ENCODE measurements at regions of chr11 and their contacts with region 1.

Region 1: DNA sequence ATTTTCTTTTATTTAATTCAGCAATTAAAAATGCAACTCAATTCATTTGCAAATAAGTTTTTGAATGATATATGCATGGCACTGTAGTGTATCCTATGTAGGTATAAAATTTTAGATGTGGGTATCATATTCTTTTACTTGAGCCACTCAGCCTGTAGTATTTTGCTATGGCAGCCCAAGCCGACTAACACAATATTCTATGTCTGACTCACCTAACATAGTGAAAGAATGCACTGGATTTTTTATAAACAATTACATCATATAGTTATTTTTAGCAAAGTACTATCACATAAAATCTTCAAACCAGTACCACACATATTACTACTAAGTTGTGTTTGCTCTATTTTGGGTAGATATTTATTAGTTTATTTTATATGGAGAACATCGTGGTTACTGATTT is 21.9 kb upstream of the GRIA4 start:
- DNase-seq: no peak
- ATAC-seq: no peak
- H3K4me3 ChIP-seq: no peak overlapping the region
- H3K27ac ChIP-seq: no peak overlapping the region
- H3K4me1 ChIP-seq: no peaks in the 10 kb centered on the region
- H3K27me3 ChIP-seq: no peaks in the 10 kb centered on the region
- CTCF ChIP-seq: no peak
- POLR2A ChIP-seq: no peak

Region 2: GRCh38 chr11:105577641-105578040 is 10.4 kb before region 1 on chr11:
- in situ Hi-C with region 1: no loop called
- intact Hi-C with region 1: loop called (anchors 1 kb)
- DNase-seq: no peak
- ATAC-seq: no peak
- H3K4me3 ChIP-seq: no peak overlapping the region
- H3K27ac ChIP-seq: no peak overlapping the region
- H3K4me1 ChIP-seq: no peaks in the 10 kb centered on the region
- H3K27me3 ChIP-seq: no peaks in the 10 kb centered on the region
- CTCF ChIP-seq: no peak
- POLR2A ChIP-seq: no peak

Region 3: GRCh38 chr11:105612771-105613170 is 24.8 kb after region 1 on chr11:
- in situ Hi-C with region 1: no loop called
- intact Hi-C with region 1: no loop called
- DNase-seq: no peak
- ATAC-seq: no peak
- H3K4me3 ChIP-seq: no peak overlapping the region
- H3K27ac ChIP-seq: no peak overlapping the region
- H3K4me1 ChIP-seq: no peaks in the 10 kb centered on the region
- H3K27me3 ChIP-seq: peaks cover 21 to 26% (median 24%) of the 10 kb centered on the region in 3 donors
- CTCF ChIP-seq: no peak
- POLR2A ChIP-seq: no peak

Measured in gastrocnemius medialis (tissue), 4 donors.